Naive thymus-derived CD4-positive, alpha-beta T cell (primary cell): ENCODE measurements at regions of chr4 and their contacts with region 1.

Region 1: GRCh38 chr4:101020956-101021355 is 326.4 kb downstream of the PPP3CA start:
- DNase-seq: peak in 3 of 9 donors; percentile 3 to 10 (median 10)
- ATAC-seq: peak; percentile 82
- H3K4me3 ChIP-seq: peak overlapping the region; percentile 21
- H3K4me3 Mint-ChIP-seq: peak overlapping the region in 4 of 10 donors; percentile 3 to 76 (median 46)
- H3K27ac ChIP-seq: no peak overlapping the region
- H3K27ac Mint-ChIP-seq: peak overlapping the region; percentile 8 to 90 (median 59)
- H3K4me1 ChIP-seq: peaks cover 0 to 48% of the 10 kb centered on the region in 2 donors
- H3K4me1 Mint-ChIP-seq: peaks cover 21 to 55% (median 34%) of the 10 kb centered on the region in 7 donors
- H3K27me3 ChIP-seq: no peaks in the 10 kb centered on the region
- H3K27me3 Mint-ChIP-seq: no peaks in the 10 kb centered on the region

Region 2: DNA sequence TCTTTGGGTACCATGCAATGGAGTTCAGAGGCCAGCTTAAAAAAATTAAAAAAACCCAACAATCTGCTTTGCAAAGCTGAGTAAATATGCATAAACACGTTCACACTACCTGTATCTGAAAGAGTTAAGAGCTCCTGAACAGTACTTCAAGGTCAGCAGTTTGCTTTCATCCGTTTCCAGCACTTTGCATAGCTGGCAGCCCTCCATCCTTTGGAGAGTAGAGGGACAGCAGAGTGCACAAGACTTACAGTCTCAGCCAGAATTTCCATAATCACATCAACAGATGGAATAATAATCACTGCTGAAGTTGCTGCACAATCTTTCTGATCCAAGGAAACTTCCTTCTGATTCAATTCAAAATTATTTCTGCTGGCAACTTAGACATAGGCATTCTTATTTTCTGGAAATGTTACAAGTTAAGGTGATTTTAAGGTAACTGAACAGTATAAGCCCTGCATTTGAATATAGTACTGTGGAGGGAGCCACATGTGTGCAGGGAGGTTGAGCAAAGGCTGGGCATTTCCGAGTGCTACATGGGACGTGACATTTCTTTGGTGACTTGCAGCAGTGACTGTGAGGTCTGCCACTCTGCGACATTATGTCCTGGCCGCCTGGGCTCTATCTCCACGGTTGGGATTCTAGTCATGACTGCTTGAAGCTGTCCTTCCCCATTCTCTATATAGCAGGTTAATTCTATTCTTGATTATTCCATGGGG is 429.6 kb before region 1 on chr4:
- CTCF ChIA-PET with region 1: no interaction called
- POLR2A ChIA-PET with region 1: no interaction called
- intact Hi-C with region 1: no loop called
- DNase-seq: no peak
- ATAC-seq: no peak
- H3K4me3 ChIP-seq: no peak overlapping the region
- H3K4me3 Mint-ChIP-seq: no peak overlapping the region
- H3K27ac ChIP-seq: no peak overlapping the region
- H3K27ac Mint-ChIP-seq: no peak overlapping the region
- H3K4me1 ChIP-seq: no peaks in the 10 kb centered on the region
- H3K4me1 Mint-ChIP-seq: no peaks in the 10 kb centered on the region
- H3K27me3 ChIP-seq: no peaks in the 10 kb centered on the region
- H3K27me3 Mint-ChIP-seq: no peaks in the 10 kb centered on the region

Region 3: DNA sequence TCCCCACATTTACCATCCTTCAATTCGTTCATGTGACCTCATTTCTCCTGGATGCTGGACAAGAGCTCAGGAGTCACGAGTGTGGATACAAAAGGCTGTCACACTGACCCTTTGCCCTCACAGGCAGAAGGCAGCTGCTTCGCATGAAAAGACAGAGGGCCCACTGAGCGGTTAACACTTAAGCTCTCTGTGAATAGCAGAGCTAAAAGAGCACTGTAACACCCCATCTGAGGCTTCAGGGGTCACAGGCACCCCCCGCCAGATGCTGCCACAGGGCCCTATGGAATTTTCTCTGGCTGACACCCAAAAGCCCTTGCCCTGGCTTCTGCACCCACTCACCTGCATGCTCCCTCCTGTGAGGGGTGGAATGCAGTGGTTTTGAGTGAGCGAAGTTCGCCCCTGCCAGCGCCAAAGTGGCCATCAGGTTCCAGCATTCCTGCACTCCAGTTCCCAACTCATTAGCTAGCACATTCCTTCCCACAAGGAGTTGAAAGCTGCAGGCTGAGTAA is 34.5 kb before region 1 on chr4:
- CTCF ChIA-PET with region 1: no interaction called
- POLR2A ChIA-PET with region 1: no interaction called
- intact Hi-C with region 1: loop called in 1 of 2 experiments (anchors 5 kb)
- DNase-seq: no peak
- ATAC-seq: no peak
- H3K4me3 ChIP-seq: no peak overlapping the region
- H3K4me3 Mint-ChIP-seq: no peak overlapping the region
- H3K27ac ChIP-seq: no peak overlapping the region
- H3K27ac Mint-ChIP-seq: no peak overlapping the region
- H3K4me1 ChIP-seq: no peaks in the 10 kb centered on the region
- H3K4me1 Mint-ChIP-seq: peaks cover 0 to 4% (median 0%) of the 10 kb centered on the region in 7 donors
- H3K27me3 ChIP-seq: no peaks in the 10 kb centered on the region
- H3K27me3 Mint-ChIP-seq: peaks cover 0 to 23% (median 4%) of the 10 kb centered on the region in 5 donors

Region 4: DNA sequence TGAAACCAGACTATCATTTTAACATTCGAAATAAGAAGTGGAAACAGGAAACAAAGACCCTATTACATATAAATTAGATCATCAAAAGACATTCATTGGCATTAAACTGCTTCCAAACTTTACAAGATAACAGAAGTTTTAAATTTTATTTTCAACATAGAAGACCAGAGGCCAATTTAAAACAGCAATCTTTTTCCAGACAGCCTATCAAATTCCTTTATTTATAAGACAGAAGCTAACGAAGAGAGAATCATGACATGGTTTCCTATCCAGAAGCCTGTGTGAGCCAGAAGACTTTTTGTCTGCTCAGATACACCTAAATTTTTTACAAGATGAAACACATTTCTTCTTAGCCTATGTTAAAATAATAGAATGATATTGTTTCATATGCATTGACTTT is 34.4 kb after region 1 on chr4:
- CTCF ChIA-PET with region 1: no interaction called
- POLR2A ChIA-PET with region 1: no interaction called
- intact Hi-C with region 1: loop called in 1 of 2 experiments (anchors 5 kb)
- DNase-seq: no peak
- ATAC-seq: no peak
- H3K4me3 ChIP-seq: no peak overlapping the region
- H3K4me3 Mint-ChIP-seq: no peak overlapping the region
- H3K27ac ChIP-seq: no peak overlapping the region
- H3K27ac Mint-ChIP-seq: no peak overlapping the region
- H3K4me1 ChIP-seq: no peaks in the 10 kb centered on the region
- H3K4me1 Mint-ChIP-seq: peaks cover 0 to 3% (median 0%) of the 10 kb centered on the region in 7 donors
- H3K27me3 ChIP-seq: no peaks in the 10 kb centered on the region
- H3K27me3 Mint-ChIP-seq: no peaks in the 10 kb centered on the region

Region 5: DNA sequence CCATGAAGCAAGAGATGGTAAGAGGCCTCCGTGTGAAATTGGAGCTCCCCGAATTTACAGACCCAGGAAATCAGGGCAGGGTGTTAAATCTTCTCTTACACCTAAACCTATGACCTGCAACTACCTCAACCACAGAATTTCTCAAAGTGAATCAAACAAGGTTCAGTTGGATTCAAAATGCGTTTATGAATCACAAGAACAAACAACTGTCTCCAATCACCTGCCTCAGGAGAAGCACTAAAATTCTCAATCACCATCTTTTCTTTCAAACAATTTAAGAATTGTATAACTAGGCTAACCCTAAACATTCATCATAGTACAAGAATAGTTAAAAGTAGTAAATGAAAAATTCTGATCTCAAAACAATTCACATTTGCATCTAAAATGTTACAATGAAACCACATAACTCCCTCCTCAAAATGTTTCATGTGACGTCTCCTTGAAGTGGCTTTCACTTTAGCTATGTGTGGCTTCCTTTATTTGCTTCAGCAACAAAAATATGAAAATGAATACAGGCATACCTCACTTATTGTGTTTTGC is 307.2 kb after region 1 on chr4:
- CTCF ChIA-PET with region 1: no interaction called
- POLR2A ChIA-PET with region 1: no interaction called
- intact Hi-C with region 1: loop called in 1 of 2 experiments (anchors 5 kb)
- DNase-seq: peak in 7 of 9 donors; percentile 47 to 78 (median 66)
- ATAC-seq: peak; percentile 93
- H3K4me3 ChIP-seq: peak overlapping the region; percentile 31
- H3K4me3 Mint-ChIP-seq: peak overlapping the region; percentile 68 to 86 (median 82)
- H3K27ac ChIP-seq: no peak overlapping the region
- H3K27ac Mint-ChIP-seq: peak overlapping the region; percentile 1 to 92 (median 83)
- H3K4me1 ChIP-seq: peaks cover 18 to 49% of the 10 kb centered on the region in 2 donors
- H3K4me1 Mint-ChIP-seq: peaks cover 31 to 66% (median 55%) of the 10 kb centered on the region in 7 donors
- H3K27me3 ChIP-seq: no peaks in the 10 kb centered on the region
- H3K27me3 Mint-ChIP-seq: peaks cover 0 to 50% (median 4%) of the 10 kb centered on the region in 5 donors

Region 6: DNA sequence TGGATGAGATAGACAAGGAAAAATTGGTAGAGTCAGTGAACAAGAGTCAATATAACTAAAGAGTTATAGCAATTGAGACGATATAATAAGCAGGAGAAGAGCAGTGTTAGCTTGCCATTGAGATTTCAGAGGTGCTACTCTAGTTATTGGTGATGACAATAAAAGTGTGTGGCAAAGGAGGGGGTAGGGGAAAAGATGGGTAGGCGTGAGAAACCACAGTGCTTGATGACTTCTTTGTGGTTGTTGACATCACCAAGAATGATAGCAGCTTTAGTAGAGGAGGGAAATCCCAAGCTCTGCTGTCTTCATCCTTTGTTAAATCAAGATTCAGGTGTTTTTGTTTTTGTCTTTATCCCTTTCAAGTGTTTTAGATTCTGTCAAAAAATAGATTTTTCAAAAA is 506.2 kb after region 1 on chr4:
- CTCF ChIA-PET with region 1: no interaction called
- POLR2A ChIA-PET with region 1: no interaction called
- intact Hi-C with region 1: loop called in 1 of 2 experiments (anchors 2 kb)
- DNase-seq: peak in 8 of 9 donors; percentile 44 to 73 (median 62)
- ATAC-seq: peak; percentile 98
- H3K4me3 ChIP-seq: no peak overlapping the region
- H3K4me3 Mint-ChIP-seq: peak overlapping the region in 3 of 10 donors; percentile 7 to 13 (median 9)
- H3K27ac ChIP-seq: no peak overlapping the region
- H3K27ac Mint-ChIP-seq: peak overlapping the region in 3 of 9 donors; percentile 1 to 51 (median 3)
- H3K4me1 ChIP-seq: peaks cover 0 to 11% of the 10 kb centered on the region in 2 donors
- H3K4me1 Mint-ChIP-seq: peaks cover 0 to 22% (median 12%) of the 10 kb centered on the region in 7 donors
- H3K27me3 ChIP-seq: no peaks in the 10 kb centered on the region
- H3K27me3 Mint-ChIP-seq: peaks cover 10 to 51% (median 32%) of the 10 kb centered on the region in 5 donors